ENCODE measurements at regions of chr7 and their contacts with region 1.

Region 1: GRCh38 chr7:726084-726853 is at the start of gene DNAAF5:
- DNase-seq: peak; percentile 73 to 90 (median 84)
- ATAC-seq: peak; percentile 97
- H3K4me3 ChIP-seq: peak within 1 kb of the TSS; percentile 81
- H3K4me3 Mint-ChIP-seq: peak within 1 kb of the TSS; percentile 72 to 88 (median 84)
- H3K27ac ChIP-seq: peak within 1 kb of the TSS; percentile 73
- H3K27ac Mint-ChIP-seq: peak within 1 kb of the TSS in 8 of 9 donors; percentile 57 to 83 (median 71)
- H3K4me1 ChIP-seq: peaks cover 14 to 15% of the 10 kb centered on the region in 2 donors
- H3K4me1 Mint-ChIP-seq: peaks cover 20 to 37% (median 21%) of the 10 kb centered on the region in 7 donors
- H3K27me3 ChIP-seq: no peaks in the 10 kb centered on the region
- H3K27me3 Mint-ChIP-seq: no peaks in the 10 kb centered on the region
- total RNA-seq, gene DNAAF5: 12.5 to 25.7 (median 14.6) TPM

Region 2: DNA sequence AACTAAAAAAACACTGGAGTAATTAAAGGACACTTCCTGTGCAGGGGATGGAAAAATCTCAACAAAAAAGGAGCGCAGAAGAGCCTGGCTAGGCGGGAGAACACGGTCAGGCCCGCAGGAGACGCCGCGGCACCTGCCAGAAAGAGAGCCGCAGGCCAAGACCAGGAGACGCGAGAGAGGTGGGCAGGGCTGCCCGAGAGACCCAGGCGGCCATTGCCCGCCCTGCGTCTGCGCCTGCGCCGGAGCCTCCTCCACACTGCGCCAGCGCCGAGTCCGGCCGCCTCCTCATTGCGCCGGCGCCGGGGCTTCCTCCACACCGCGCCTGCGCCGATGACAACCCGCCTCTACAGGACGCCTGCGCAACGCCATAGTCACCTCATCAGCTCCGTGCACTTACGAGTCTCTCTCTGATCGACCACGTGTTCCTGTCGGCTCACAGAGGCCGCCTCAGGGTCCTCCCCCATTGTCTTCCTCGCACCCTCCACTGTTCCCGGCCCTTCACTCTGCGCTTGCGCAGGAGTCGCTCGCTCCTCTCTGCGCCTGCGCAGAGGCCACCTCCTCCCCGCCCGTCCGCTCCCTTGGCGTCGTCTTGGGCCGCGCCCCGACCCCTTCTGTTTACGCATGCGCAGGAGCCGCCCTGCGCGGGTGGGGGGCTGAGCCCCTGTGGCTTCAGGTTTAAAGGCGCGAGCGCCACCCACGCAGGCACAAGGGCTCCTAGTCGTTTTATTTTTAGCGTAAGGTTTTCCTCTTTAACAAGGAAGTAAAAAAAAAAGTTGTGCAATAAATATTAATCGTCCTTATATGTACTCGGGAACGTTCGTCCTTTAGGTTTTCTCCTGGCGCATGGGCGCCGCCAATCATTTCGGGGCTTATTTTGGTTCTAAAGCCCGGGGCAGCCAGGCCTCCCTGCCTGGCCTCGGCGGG is 577.1 kb before region 1 on chr7:
- CTCF ChIA-PET with region 1: no interaction called
- POLR2A ChIA-PET with region 1: no interaction called
- intact Hi-C with region 1: loop called in 1 of 2 experiments (anchors 5 kb)
- DNase-seq: peak; percentile 97 to 99 (median 99)
- ATAC-seq: peak; percentile 97
- H3K4me3 ChIP-seq: peak overlapping the region; percentile 52
- H3K4me3 Mint-ChIP-seq: peak overlapping the region; percentile 80 to 97 (median 91)
- H3K27ac ChIP-seq: peak overlapping the region; percentile 82
- H3K27ac Mint-ChIP-seq: peak overlapping the region; percentile 94 to 100 (median 99)
- H3K4me1 ChIP-seq: peaks cover 18 to 19% of the 10 kb centered on the region in 2 donors
- H3K4me1 Mint-ChIP-seq: peaks cover 9 to 25% (median 20%) of the 10 kb centered on the region in 7 donors
- H3K27me3 ChIP-seq: no peaks in the 10 kb centered on the region
- H3K27me3 Mint-ChIP-seq: peaks cover 0 to 4% (median 0%) of the 10 kb centered on the region in 5 donors

Region 3: GRCh38 chr7:322111-322671 is 404.1 kb before region 1 on chr7:
- CTCF ChIA-PET with region 1: no interaction called
- POLR2A ChIA-PET with region 1: no interaction called
- intact Hi-C with region 1: loop called (anchors 1 to 2 kb)
- DNase-seq: peak; percentile 74 to 98 (median 85)
- ATAC-seq: peak; percentile 100
- H3K4me3 ChIP-seq: no peak overlapping the region
- H3K4me3 Mint-ChIP-seq: no peak overlapping the region
- H3K27ac ChIP-seq: no peak overlapping the region
- H3K27ac Mint-ChIP-seq: no peak overlapping the region
- H3K4me1 ChIP-seq: no peaks in the 10 kb centered on the region
- H3K4me1 Mint-ChIP-seq: peaks cover 0 to 6% (median 0%) of the 10 kb centered on the region in 7 donors
- H3K27me3 ChIP-seq: no peaks in the 10 kb centered on the region
- H3K27me3 Mint-ChIP-seq: peaks cover 15 to 36% (median 23%) of the 10 kb centered on the region in 5 donors

Region 4: GRCh38 chr7:518630-519483 is 207.4 kb before region 1 on chr7:
- CTCF ChIA-PET with region 1: no interaction called
- POLR2A ChIA-PET with region 1: no interaction called
- intact Hi-C with region 1: loop called (anchors 2 to 10 kb)
- DNase-seq: peak in 4 of 9 donors; percentile 17 to 66 (median 24)
- ATAC-seq: peak; percentile 18
- H3K4me3 ChIP-seq: peak overlapping the region; percentile 52
- H3K4me3 Mint-ChIP-seq: peak overlapping the region; percentile 59 to 89 (median 80)
- H3K27ac ChIP-seq: no peak overlapping the region
- H3K27ac Mint-ChIP-seq: peak overlapping the region in 2 of 9 donors; percentile 39 to 43
- H3K4me1 ChIP-seq: peaks cover 0 to 30% of the 10 kb centered on the region in 2 donors
- H3K4me1 Mint-ChIP-seq: peaks cover 0 to 21% (median 15%) of the 10 kb centered on the region in 7 donors
- H3K27me3 ChIP-seq: peaks cover 0 to 20% of the 10 kb centered on the region in 2 donors
- H3K27me3 Mint-ChIP-seq: peaks cover 22 to 47% (median 24%) of the 10 kb centered on the region in 5 donors

Region 5: GRCh38 chr7:620052-620451 is 106.2 kb before region 1 on chr7:
- CTCF ChIA-PET with region 1: no interaction called
- POLR2A ChIA-PET with region 1: interaction called, 3 read pairs
- intact Hi-C with region 1: loop called (anchors 1 to 2 kb)
- DNase-seq: no peak
- ATAC-seq: no peak
- H3K4me3 ChIP-seq: no peak overlapping the region
- H3K4me3 Mint-ChIP-seq: peak overlapping the region in 7 of 10 donors; percentile 33 to 93 (median 79)
- H3K27ac ChIP-seq: peak overlapping the region; percentile 91
- H3K27ac Mint-ChIP-seq: peak overlapping the region; percentile 96 to 100 (median 99)
- H3K4me1 ChIP-seq: peaks cover 39 to 42% of the 10 kb centered on the region in 2 donors
- H3K4me1 Mint-ChIP-seq: peaks cover 32 to 77% (median 54%) of the 10 kb centered on the region in 7 donors
- H3K27me3 ChIP-seq: no peaks in the 10 kb centered on the region
- H3K27me3 Mint-ChIP-seq: no peaks in the 10 kb centered on the region

Region 6: GRCh38 chr7:712381-713138 is 13.7 kb before region 1 on chr7:
- CTCF ChIA-PET with region 1: no interaction called
- POLR2A ChIA-PET with region 1: interaction called, 5 read pairs
- intact Hi-C with region 1: loop called in 1 of 2 experiments (anchors 1 kb)
- DNase-seq: peak in 4 of 9 donors; percentile 28 to 43 (median 42)
- ATAC-seq: peak; percentile 75
- H3K4me3 ChIP-seq: peak overlapping the region; percentile 24
- H3K4me3 Mint-ChIP-seq: peak overlapping the region in 9 of 10 donors; percentile 9 to 86 (median 68)
- H3K27ac ChIP-seq: peak overlapping the region; percentile 62
- H3K27ac Mint-ChIP-seq: peak overlapping the region in 6 of 9 donors; percentile 53 to 87 (median 82)
- H3K4me1 ChIP-seq: peaks cover 0 to 5% of the 10 kb centered on the region in 2 donors
- H3K4me1 Mint-ChIP-seq: peaks cover 5 to 34% (median 15%) of the 10 kb centered on the region in 7 donors
- H3K27me3 ChIP-seq: no peaks in the 10 kb centered on the region
- H3K27me3 Mint-ChIP-seq: peaks cover 0 to 5% (median 0%) of the 10 kb centered on the region in 5 donors

Region 7: GRCh38 chr7:1086588-1087464 is 360.6 kb after region 1 on chr7:
- CTCF ChIA-PET with region 1: no interaction called
- POLR2A ChIA-PET with region 1: no interaction called
- intact Hi-C with region 1: no loop called
- DNase-seq: peak; percentile 44 to 83 (median 71)
- ATAC-seq: peak; percentile 87
- H3K4me3 ChIP-seq: peak overlapping the region; percentile 50
- H3K4me3 Mint-ChIP-seq: peak overlapping the region; percentile 59 to 86 (median 80)
- H3K27ac ChIP-seq: no peak overlapping the region
- H3K27ac Mint-ChIP-seq: peak overlapping the region in 1 of 9 donors; percentile 82
- H3K4me1 ChIP-seq: peaks cover 3 to 6% of the 10 kb centered on the region in 2 donors
- H3K4me1 Mint-ChIP-seq: peaks cover 7 to 20% (median 12%) of the 10 kb centered on the region in 7 donors
- H3K27me3 ChIP-seq: no peaks in the 10 kb centered on the region
- H3K27me3 Mint-ChIP-seq: peaks cover 0 to 3% (median 0%) of the 10 kb centered on the region in 5 donors

Region 8: DNA sequence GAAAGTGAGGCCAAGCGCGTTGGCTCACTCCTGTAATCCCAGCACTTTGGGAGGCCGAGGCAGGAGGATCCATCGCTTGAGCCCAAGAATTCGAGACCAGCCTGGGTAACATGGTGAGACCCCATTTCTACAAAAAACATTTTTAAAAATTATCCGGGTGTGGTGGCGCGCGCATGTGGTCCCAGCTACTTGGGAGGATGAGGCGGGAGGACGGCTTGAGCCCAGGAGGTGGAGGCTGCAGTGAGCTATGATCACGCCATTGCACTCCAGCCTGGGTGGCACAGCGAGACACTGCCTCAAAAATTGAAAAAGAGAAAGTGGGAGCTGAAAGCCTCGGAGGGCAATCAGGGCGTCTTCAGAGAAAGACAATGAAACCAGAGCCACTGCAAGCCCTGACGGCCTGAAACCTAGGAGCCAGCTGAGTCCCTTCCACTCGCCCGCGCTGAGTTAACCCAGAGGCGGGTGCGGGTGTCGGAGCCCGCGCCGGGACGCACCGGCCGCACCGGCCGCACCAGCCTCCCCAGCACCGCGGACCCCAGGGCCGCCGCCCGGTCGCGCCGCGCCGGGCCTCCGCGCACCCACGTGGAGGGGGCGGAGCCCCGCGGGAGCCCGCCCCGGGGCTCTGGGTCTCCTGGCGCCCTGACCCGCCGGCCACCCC is 411.4 kb after region 1 on chr7:
- CTCF ChIA-PET with region 1: no interaction called
- POLR2A ChIA-PET with region 1: no interaction called
- intact Hi-C with region 1: loop called in 1 of 2 experiments (anchors 2 kb)
- DNase-seq: no peak
- ATAC-seq: peak; percentile 82
- H3K4me3 ChIP-seq: peak overlapping the region; percentile 83
- H3K4me3 Mint-ChIP-seq: peak overlapping the region; percentile 74 to 94 (median 91)
- H3K27ac ChIP-seq: peak overlapping the region; percentile 82
- H3K27ac Mint-ChIP-seq: peak overlapping the region; percentile 51 to 94 (median 86)
- H3K4me1 ChIP-seq: peaks cover 7 to 13% of the 10 kb centered on the region in 2 donors
- H3K4me1 Mint-ChIP-seq: peaks cover 8 to 19% (median 16%) of the 10 kb centered on the region in 7 donors
- H3K27me3 ChIP-seq: no peaks in the 10 kb centered on the region
- H3K27me3 Mint-ChIP-seq: no peaks in the 10 kb centered on the region

Region 9: GRCh38 chr7:2019607-2020511 is 1293.6 kb after region 1 on chr7:
- CTCF ChIA-PET with region 1: no interaction called
- POLR2A ChIA-PET with region 1: no interaction called
- intact Hi-C with region 1: no loop called
- DNase-seq: peak; percentile 35 to 79 (median 69)
- ATAC-seq: peak; percentile 87
- H3K4me3 ChIP-seq: peak overlapping the region; percentile 18
- H3K4me3 Mint-ChIP-seq: peak overlapping the region in 9 of 10 donors; percentile 72 to 87 (median 78)
- H3K27ac ChIP-seq: peak overlapping the region; percentile 46
- H3K27ac Mint-ChIP-seq: peak overlapping the region; percentile 63 to 99 (median 90)
- H3K4me1 ChIP-seq: peaks cover 0 to 16% of the 10 kb centered on the region in 2 donors
- H3K4me1 Mint-ChIP-seq: peaks cover 13 to 36% (median 31%) of the 10 kb centered on the region in 7 donors
- H3K27me3 ChIP-seq: no peaks in the 10 kb centered on the region
- H3K27me3 Mint-ChIP-seq: no peaks in the 10 kb centered on the region

Measured in naive thymus-derived CD4-positive, alpha-beta T cell (primary cell).